CD8-positive, alpha-beta T cell (primary cell): ENCODE measurements at regions of chr4 and their contacts with region 1.

Region 1: DNA sequence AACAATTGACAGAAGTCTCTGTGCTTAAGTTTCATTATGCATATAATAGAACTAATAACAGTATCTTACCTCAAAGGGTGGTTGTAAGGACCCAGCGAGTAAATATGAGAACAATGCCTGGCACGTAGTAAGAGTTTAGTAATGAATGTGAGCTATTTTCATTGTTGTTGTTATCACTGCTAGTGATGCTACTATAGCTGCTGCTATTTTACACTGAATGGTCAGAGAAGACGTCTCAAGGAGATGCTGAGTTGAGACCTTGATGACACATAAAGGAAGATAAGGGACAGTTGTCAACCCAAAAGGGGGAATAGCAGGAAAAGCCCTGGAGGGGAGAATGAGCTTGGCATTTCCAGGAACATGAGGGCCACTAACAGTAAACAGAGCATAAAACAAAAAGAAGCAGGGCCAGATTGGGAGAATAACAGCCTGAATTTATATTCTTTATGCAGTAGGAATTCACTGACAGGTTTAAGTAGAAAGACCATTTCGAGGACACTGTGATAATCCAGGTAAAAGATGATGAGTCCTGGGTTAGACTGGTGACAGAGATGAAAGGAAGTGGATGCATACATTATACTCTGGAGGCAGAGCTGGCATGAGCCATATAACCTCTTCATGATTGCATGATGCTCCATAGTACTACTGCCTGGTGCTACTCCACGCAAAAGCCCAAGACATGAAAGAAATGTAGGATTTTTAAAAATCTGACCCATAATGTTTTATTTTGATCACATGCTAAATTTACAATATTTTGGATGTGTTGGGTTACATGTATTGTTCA is 23.1 kb downstream of the ATP8A1 start:
- DNase-seq: no peak
- ATAC-seq: no peak
- H3K4me3 ChIP-seq: no peak overlapping the region
- H3K4me3 Mint-ChIP-seq: no peak overlapping the region
- H3K27ac ChIP-seq: no peak overlapping the region
- H3K27ac Mint-ChIP-seq: peak overlapping the region; percentile 9
- H3K4me1 ChIP-seq: peaks cover 88% of the 10 kb centered on the region
- H3K4me1 Mint-ChIP-seq: peaks cover 92% of the 10 kb centered on the region
- H3K27me3 ChIP-seq: no peaks in the 10 kb centered on the region
- H3K27me3 Mint-ChIP-seq: no peaks in the 10 kb centered on the region
- CTCF ChIP-seq: no peak

Region 2: GRCh38 chr4:41815474-41815873 is 818.3 kb before region 1 on chr4:
- CTCF ChIA-PET with region 1: no interaction called
- POLR2A ChIA-PET with region 1: no interaction called
- intact Hi-C with region 1: no loop called
- DNase-seq: no peak
- ATAC-seq: no peak
- H3K4me3 ChIP-seq: no peak overlapping the region
- H3K4me3 Mint-ChIP-seq: no peak overlapping the region
- H3K27ac ChIP-seq: no peak overlapping the region
- H3K27ac Mint-ChIP-seq: no peak overlapping the region
- H3K4me1 ChIP-seq: no peaks in the 10 kb centered on the region
- H3K4me1 Mint-ChIP-seq: no peaks in the 10 kb centered on the region
- H3K27me3 ChIP-seq: no peaks in the 10 kb centered on the region
- H3K27me3 Mint-ChIP-seq: peaks cover 12% of the 10 kb centered on the region
- CTCF ChIP-seq: no peak

Region 3: DNA sequence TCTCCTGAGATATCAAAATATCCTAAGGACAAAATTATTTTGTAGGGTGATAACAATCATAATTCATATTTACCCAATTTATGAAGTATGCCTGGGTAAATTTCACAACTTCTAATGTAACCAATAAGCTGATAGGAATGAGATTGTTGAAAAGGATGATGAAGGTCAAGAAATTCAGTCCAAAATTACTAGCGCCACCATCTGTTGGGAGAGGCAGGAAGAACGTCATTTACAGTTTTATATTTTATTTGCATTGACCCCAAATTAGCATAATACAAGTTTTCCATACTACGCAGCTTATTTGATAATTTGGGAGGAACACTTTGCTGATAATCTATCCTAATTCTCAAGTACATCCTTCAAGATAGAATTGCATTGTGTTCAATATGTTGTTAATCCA is 55.6 kb before region 1 on chr4:
- CTCF ChIA-PET with region 1: no interaction called
- POLR2A ChIA-PET with region 1: no interaction called
- intact Hi-C with region 1: no loop called
- DNase-seq: no peak
- ATAC-seq: no peak
- H3K4me3 ChIP-seq: no peak overlapping the region
- H3K4me3 Mint-ChIP-seq: no peak overlapping the region
- H3K27ac ChIP-seq: no peak overlapping the region
- H3K27ac Mint-ChIP-seq: no peak overlapping the region
- H3K4me1 ChIP-seq: no peaks in the 10 kb centered on the region
- H3K4me1 Mint-ChIP-seq: no peaks in the 10 kb centered on the region
- H3K27me3 ChIP-seq: no peaks in the 10 kb centered on the region
- H3K27me3 Mint-ChIP-seq: no peaks in the 10 kb centered on the region
- CTCF ChIP-seq: no peak

Region 4: GRCh38 chr4:42617030-42617429 is 16.8 kb before region 1 on chr4:
- CTCF ChIA-PET with region 1: interaction called, 5 read pairs
- POLR2A ChIA-PET with region 1: interaction called, 3 read pairs
- intact Hi-C with region 1: loop called in 1 of 2 experiments (anchors 2 kb)
- DNase-seq: no peak
- ATAC-seq: no peak
- H3K4me3 ChIP-seq: no peak overlapping the region
- H3K4me3 Mint-ChIP-seq: no peak overlapping the region
- H3K27ac ChIP-seq: no peak overlapping the region
- H3K27ac Mint-ChIP-seq: no peak overlapping the region
- H3K4me1 ChIP-seq: no peaks in the 10 kb centered on the region
- H3K4me1 Mint-ChIP-seq: peaks cover 16% of the 10 kb centered on the region
- H3K27me3 ChIP-seq: no peaks in the 10 kb centered on the region
- H3K27me3 Mint-ChIP-seq: no peaks in the 10 kb centered on the region
- CTCF ChIP-seq: no peak

Region 5: DNA sequence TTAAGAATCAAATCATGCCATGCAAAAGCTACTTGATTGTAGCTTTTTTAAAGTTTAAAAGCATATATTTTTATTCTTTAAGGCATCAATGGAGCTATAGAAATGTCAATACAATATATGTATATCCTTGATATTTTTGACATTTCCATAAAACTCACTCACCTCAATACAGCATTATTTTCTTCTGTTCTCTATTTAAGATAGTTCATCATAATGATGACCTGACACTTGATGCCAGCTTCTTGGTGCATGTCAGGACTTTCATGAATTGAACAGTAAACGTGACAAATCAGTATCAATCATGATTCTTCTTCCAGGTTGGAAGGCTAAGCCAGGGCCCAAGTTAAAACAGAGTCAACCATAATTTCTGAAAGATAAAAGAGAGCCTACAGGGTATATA is 56.7 kb after region 1 on chr4:
- CTCF ChIA-PET with region 1: no interaction called
- POLR2A ChIA-PET with region 1: no interaction called
- intact Hi-C with region 1: no loop called
- DNase-seq: no peak
- ATAC-seq: no peak
- H3K4me3 ChIP-seq: no peak overlapping the region
- H3K4me3 Mint-ChIP-seq: no peak overlapping the region
- H3K27ac ChIP-seq: no peak overlapping the region
- H3K27ac Mint-ChIP-seq: no peak overlapping the region
- H3K4me1 ChIP-seq: no peaks in the 10 kb centered on the region
- H3K4me1 Mint-ChIP-seq: no peaks in the 10 kb centered on the region
- H3K27me3 ChIP-seq: no peaks in the 10 kb centered on the region
- H3K27me3 Mint-ChIP-seq: no peaks in the 10 kb centered on the region
- CTCF ChIP-seq: no peak